Panc1 (cell line): ENCODE measurements at regions of chr6 and their contacts with region 1.

Region 1: DNA sequence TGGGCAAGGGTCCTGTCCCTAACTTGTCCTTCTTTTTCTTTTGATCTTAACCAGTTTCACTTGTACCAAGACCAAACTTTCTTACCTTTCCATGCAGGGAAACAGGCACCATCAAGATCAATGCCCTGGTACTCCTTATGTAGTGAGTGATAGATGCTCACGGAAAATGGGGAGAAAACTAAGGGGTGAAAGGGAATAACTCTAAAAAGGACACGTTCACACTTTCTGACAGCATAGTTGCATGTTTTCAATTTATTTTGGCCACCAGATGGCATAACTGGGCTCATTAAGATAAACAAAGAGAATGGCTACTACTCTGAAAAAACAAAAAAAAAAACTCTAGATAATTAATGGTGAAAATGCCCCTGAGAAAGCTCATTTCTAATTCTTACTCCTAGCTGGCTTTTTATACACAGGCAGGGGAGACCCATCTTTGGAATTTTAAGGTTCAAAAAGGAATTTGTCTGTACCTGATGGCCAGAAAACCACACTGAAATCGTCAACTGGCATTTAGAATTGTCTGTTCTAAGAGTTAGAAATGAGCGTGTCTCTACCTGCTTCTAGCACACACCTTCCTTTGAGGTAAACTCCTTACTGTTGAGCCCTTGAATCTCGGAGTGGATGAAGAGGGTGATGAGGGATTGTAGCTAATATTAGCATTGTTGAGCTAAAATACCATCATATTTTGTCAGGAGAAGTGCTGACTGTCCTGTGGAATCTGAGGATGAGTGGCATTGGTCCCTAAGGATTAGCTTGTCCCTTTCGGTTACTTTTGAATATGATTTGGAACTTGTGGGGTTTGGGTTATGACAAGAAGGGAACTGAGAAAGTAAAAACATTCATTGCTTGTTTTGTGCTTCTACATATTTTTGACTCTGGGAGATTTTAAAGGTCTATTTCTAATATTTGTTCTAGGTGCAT is 62.2 kb upstream of the DDR1 start:
- DNase-seq: no peak
- ATAC-seq: peak; percentile 60; the same call in 1 of the 2 replicates
- H3K4me3 ChIP-seq: peak overlapping the region in 1 of 2 experiments; percentile 32; a peak in 2 of 4 replicates
- H3K27ac ChIP-seq: peak overlapping the region; percentile 92
- H3K4me1 ChIP-seq: peaks cover 46% of the 10 kb centered on the region
- H3K27me3 ChIP-seq: no peaks in the 10 kb centered on the region
- CTCF ChIP-seq: peak; percentile 74

Region 2: DNA sequence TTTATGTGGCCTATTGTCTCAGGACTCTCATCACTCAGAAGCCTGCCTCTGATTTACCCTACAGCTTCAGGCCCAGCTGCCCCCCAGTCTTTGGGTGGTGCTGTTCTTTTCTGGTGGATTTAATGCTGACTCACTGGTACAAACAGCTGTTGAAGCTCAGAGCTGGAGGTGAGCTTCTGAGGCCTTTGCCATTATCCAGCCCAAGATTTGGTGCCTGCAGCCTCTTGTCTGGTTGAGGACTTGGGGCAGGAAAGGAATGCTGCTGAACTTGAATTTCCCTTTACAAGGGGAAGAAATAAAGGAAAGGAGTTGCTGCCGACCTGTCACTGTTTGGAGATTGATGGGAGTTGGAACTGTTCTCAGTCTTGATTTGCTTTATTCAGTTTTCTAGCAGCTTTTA is 231.1 kb before region 1 on chr6:
- CTCF ChIA-PET with region 1: no interaction called
- POLR2A ChIA-PET with region 1: no interaction called
- in situ Hi-C with region 1: no loop called
- intact Hi-C with region 1: no loop called
- DNase-seq: no peak
- ATAC-seq: no peak
- H3K4me3 ChIP-seq: no peak overlapping the region
- H3K27ac ChIP-seq: no peak overlapping the region
- H3K4me1 ChIP-seq: no peaks in the 10 kb centered on the region
- H3K27me3 ChIP-seq: no peaks in the 10 kb centered on the region
- CTCF ChIP-seq: no peak

Region 3: DNA sequence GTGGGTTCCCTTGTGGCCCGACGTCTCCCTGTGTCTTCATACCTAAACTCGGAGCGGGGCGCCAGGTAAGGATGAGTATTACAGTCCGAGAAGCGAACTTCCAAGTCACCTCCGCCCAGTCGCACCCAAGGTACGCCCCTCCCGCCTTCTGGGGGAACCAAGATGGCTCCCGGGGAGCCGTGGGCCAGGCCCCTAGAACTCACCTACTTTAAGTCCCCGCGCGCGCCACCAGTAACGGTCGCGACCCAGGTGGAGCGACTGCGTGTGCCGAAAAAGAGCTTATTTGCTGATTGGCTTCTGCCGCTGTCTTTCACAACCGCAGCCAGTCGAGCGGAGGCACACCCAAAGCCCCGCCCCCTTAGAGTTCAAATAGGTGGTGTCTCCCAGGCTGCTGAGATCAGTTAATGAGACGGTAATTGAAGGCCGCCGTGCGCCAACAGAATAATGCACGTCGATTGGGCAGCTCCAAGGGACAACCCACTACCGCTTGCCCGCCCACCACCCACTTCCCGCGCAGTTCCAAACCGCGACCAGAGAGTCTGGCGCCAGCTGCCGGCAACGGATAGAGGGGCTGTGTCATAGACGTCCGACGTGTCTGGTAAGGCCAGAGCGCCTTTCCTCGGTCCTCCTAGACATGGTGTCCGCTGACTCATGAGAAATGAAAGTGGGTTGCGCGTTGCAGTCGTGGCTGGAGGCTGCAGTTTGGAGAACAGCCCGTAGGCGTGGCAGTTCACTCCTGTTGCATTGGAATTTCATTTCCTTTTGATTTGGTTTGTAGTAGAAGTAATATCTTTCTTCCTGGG is 104.9 kb before region 1 on chr6 and contains the start of gene MDC1:
- CTCF ChIA-PET with region 1: no interaction called
- POLR2A ChIA-PET with region 1: interaction called, 10 read pairs
- in situ Hi-C with region 1: no loop called
- intact Hi-C with region 1: no loop called
- DNase-seq: peak; percentile 98
- ATAC-seq: peak; percentile 88
- H3K4me3 ChIP-seq: peak within 1 kb of the TSS; percentile 69 to 85
- H3K27ac ChIP-seq: peak within 1 kb of the TSS; percentile 100
- H3K4me1 ChIP-seq: peaks cover 15% of the 10 kb centered on the region
- H3K27me3 ChIP-seq: no peaks in the 10 kb centered on the region
- CTCF ChIP-seq: no peak
- total RNA-seq, gene MDC1: 68.6 TPM